Activated CD4-positive, alpha-beta memory T cell treated with anti-CD3 and anti-CD28 coated beads, Interleukin-2, amount 10 ng/mL, durations not matched to agents 7 days and 5 days (primary cell): ENCODE measurements at regions of chr1 and their contacts with region 1.

Region 1: GRCh38 chr1:77683160-77684148 is 996 bp upstream of the ZZZ3 start:
- DNase-seq: peak; percentile 92
- H3K4me3 Mint-ChIP-seq: peak overlapping the region; percentile 79
- H3K27ac Mint-ChIP-seq: peak overlapping the region; percentile 85
- H3K4me1 Mint-ChIP-seq: peaks cover 29% of the 10 kb centered on the region
- H3K27me3 Mint-ChIP-seq: no peaks in the 10 kb centered on the region

Region 2: GRCh38 chr1:77671836-77672235 is 11.6 kb before region 1 on chr1:
- CTCF ChIA-PET with region 1: interaction called, 14 read pairs
- POLR2A ChIA-PET with region 1: interaction called, 34 read pairs
- DNase-seq: no peak
- H3K4me3 Mint-ChIP-seq: peak overlapping the region; percentile 33
- H3K27ac Mint-ChIP-seq: peak overlapping the region; percentile 52
- H3K4me1 Mint-ChIP-seq: peaks cover 58% of the 10 kb centered on the region
- H3K27me3 Mint-ChIP-seq: no peaks in the 10 kb centered on the region

Region 3: DNA sequence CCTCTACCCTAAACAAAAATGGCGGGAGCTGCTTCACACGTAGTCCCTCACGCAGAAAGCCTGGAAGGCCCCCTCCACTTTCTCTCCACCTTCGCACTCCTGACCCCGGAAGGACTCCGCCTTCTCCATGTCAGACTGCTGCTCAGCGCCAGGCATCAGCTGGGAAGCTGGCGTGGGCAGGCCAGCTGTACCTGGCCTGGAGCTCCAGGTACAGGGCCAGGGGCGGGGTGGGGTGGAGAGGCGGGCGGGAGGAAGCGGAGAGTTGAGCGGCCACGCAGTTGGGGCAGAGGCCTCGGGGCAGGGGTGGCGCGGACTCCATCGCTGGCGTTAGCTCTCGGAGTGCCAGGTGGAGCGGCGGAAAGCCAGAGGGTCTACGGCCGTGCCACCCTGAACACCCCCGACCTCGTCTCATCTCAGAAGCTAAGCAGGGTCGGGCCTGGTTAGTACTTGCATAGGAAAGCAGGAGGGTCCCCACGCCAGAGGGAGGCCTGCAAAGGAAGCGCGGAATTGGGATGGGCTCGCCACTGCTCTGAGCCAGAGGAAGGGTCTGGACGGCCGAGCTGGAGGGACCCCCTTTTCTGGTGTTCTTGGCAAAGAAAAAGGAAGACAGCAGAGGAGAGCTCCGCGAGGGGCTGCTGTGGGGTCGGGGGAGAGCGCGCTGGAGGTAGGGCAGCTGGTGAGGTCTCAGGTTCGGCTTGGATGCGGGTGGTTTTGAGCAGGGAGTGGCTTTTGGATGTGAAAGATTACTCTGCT is 96.3 kb after region 1 on chr1 and contains the start of gene MIGA1:
- CTCF ChIA-PET with region 1: interaction called, 5 read pairs
- POLR2A ChIA-PET with region 1: interaction called, 17 read pairs
- DNase-seq: peak; percentile 88
- H3K4me3 Mint-ChIP-seq: peak within 1 kb of the TSS; percentile 89
- H3K27ac Mint-ChIP-seq: peak within 1 kb of the TSS; percentile 73
- H3K4me1 Mint-ChIP-seq: peaks cover 36% of the 10 kb centered on the region
- H3K27me3 Mint-ChIP-seq: no peaks in the 10 kb centered on the region
- total RNA-seq, gene MIGA1: 11.5 to 12.8 TPM

Region 4: DNA sequence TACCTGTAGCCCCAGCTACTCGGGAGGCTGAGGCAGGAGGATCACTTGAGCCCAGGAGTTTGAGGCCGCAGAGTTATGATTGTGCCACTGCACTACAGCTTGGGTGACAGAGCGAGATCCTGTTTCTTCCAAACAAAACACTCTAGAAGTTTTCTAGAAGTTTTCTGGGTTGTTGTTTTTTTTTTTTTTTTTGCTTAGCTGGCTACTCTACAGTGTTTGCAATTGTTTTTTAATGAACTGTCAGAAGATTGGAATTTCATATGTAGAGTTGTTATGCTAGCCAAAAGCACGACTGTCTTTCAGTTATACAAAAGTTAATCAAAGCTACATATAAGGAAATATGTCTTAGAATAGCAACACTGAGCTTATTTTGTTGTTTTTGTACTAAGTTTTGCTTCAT is 174.1 kb after region 1 on chr1:
- CTCF ChIA-PET with region 1: no interaction called
- POLR2A ChIA-PET with region 1: no interaction called
- DNase-seq: no peak
- H3K4me3 Mint-ChIP-seq: no peak overlapping the region
- H3K27ac Mint-ChIP-seq: no peak overlapping the region
- H3K4me1 Mint-ChIP-seq: no peaks in the 10 kb centered on the region
- H3K27me3 Mint-ChIP-seq: no peaks in the 10 kb centered on the region